GM23248 (cell line): ENCODE measurements at regions of chr9 and their contacts with region 1.

Region 1: DNA sequence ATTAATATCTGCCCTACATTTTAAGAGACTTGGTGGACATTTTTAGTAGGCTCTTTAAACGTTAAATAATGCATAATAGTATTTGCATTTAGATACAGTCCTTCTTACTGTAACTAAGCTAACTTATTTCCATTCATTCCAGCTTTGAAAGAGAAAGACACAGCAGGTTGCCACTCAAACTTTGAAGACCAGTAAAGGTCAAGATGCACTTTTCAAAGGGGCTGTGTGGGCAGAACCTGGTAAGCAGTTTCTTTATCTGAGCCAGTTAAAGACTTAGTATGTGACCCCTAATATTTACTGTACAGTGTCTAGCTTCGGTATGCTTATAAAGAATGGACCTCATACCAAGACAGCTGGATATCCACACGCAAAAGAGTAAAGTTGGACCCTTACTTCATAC is 20.8 kb downstream of the PLGRKT start:
- DNase-seq: no peak
- H3K4me3 ChIP-seq: no peak overlapping the region
- H3K27ac ChIP-seq: no peak overlapping the region
- H3K4me1 ChIP-seq: no peaks in the 10 kb centered on the region
- H3K27me3 ChIP-seq: no peaks in the 10 kb centered on the region

Region 2: GRCh38 chr9:5195453-5195852 is 221.5 kb before region 1 on chr9:
- in situ Hi-C with region 1: loop called (anchors 10 kb)
- DNase-seq: no peak
- H3K4me3 ChIP-seq: no peak overlapping the region
- H3K27ac ChIP-seq: no peak overlapping the region
- H3K4me1 ChIP-seq: no peaks in the 10 kb centered on the region
- H3K27me3 ChIP-seq: peaks cover 20% of the 10 kb centered on the region